Sigmoid colon (tissue), 7 donors: ENCODE measurements at regions of chr6 and their contacts with region 1.

Region 1: GRCh38 chr6:87472525-87473418 is at the start of gene SLC35A1:
- DNase-seq: peak; percentile 91
- H3K4me3 ChIP-seq: peak within 1 kb of the TSS; percentile 60 to 91 (median 74)
- H3K27ac ChIP-seq: peak within 1 kb of the TSS; percentile 86 to 95 (median 90)
- H3K4me1 ChIP-seq: peaks cover 0 to 10% (median 8%) of the 10 kb centered on the region in 4 donors
- H3K27me3 ChIP-seq: no peaks in the 10 kb centered on the region
- CTCF ChIP-seq: peak in 3 of 4 experiments; percentile 24 to 43 (median 33)
- EP300 ChIP-seq: no peak
- POLR2A ChIP-seq: peak; percentile 60 to 67
- total RNA-seq, gene SLC35A1: 17.2 to 22.5 (median 20.1) TPM

Region 2: DNA sequence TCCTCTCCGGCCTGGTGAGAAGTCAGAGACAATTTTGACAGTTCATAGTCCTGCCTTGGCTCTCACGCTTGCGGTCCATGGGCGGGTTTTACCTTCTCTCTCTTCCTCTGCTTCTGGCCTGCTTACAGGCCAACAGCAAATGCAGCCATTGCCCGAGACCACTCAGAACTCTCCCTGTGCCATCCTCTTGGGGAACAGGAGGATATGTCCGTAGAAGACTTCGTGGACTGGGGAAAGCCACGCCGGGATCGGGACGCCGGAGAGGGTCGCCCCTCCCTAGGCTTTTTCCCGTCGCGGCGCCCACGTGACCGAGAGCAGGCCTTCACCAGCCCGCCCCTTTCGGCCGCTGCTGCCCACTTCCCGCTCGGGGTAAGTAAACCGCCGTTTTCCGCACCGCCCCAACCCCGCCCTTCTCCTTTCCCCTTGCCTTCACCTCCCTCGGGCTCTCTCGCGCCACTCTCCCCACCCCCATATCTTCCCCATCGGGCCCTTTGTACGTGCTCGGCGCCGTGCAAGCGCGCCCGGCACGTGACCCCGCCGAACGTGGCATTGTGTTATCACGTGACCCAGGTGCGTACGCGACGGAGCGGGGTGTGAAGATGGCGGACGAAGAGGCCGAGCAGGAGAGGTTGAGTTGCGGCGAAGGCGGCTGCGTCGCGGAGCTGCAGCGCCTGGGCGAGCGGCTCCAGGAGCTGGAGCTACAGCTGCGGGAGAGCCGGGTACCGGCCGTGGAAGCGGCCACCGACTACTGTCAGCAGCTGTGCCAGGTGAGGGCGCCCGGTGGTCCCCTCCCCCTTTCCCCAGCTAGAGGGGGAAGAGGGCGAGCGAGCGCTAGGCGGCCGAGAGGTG is 317.6 kb before region 1 on chr6 and contains the start of gene ZNF292:
- intact Hi-C with region 1: loop called (anchors 5 kb)
- DNase-seq: peak; percentile 98
- H3K4me3 ChIP-seq: peak within 1 kb of the TSS; percentile 82 to 98 (median 94)
- H3K27ac ChIP-seq: peak within 1 kb of the TSS; percentile 92 to 98 (median 94)
- H3K4me1 ChIP-seq: peaks cover 0 to 56% (median 49%) of the 10 kb centered on the region in 4 donors
- H3K27me3 ChIP-seq: no peaks in the 10 kb centered on the region
- CTCF ChIP-seq: no peak
- EP300 ChIP-seq: peak in 2 of 4 donors; percentile 37 to 46
- POLR2A ChIP-seq: peak; percentile 28 to 49
- total RNA-seq, gene ZNF292: 50.7 to 117 (median 54.7) TPM

Region 3: GRCh38 chr6:87322304-87323212 is 150.2 kb before region 1 on chr6 and contains the start of gene SMIM8:
- intact Hi-C with region 1: loop called (anchors 2 kb)
- DNase-seq: peak; percentile 88
- H3K4me3 ChIP-seq: peak within 1 kb of the TSS; percentile 51 to 92 (median 78)
- H3K27ac ChIP-seq: peak within 1 kb of the TSS; percentile 34 to 81 (median 78)
- H3K4me1 ChIP-seq: peaks cover 0 to 12% (median 7%) of the 10 kb centered on the region in 4 donors
- H3K27me3 ChIP-seq: no peaks in the 10 kb centered on the region
- CTCF ChIP-seq: peak; percentile 74 to 100 (median 86)
- EP300 ChIP-seq: no peak
- POLR2A ChIP-seq: peak in 1 of 2 donors; percentile 19
- total RNA-seq, gene SMIM8: 6.1 to 16.8 (median 12.0) TPM

Region 4: GRCh38 chr6:87393022-87393622 is 79.7 kb before region 1 on chr6:
- intact Hi-C with region 1: loop called (anchors 5 kb)
- DNase-seq: no peak
- H3K4me3 ChIP-seq: no peak overlapping the region
- H3K27ac ChIP-seq: no peak overlapping the region
- H3K4me1 ChIP-seq: no peaks in the 10 kb centered on the region
- H3K27me3 ChIP-seq: no peaks in the 10 kb centered on the region
- CTCF ChIP-seq: peak; percentile 41 to 70 (median 62)
- EP300 ChIP-seq: no peak
- POLR2A ChIP-seq: no peak

Region 5: DNA sequence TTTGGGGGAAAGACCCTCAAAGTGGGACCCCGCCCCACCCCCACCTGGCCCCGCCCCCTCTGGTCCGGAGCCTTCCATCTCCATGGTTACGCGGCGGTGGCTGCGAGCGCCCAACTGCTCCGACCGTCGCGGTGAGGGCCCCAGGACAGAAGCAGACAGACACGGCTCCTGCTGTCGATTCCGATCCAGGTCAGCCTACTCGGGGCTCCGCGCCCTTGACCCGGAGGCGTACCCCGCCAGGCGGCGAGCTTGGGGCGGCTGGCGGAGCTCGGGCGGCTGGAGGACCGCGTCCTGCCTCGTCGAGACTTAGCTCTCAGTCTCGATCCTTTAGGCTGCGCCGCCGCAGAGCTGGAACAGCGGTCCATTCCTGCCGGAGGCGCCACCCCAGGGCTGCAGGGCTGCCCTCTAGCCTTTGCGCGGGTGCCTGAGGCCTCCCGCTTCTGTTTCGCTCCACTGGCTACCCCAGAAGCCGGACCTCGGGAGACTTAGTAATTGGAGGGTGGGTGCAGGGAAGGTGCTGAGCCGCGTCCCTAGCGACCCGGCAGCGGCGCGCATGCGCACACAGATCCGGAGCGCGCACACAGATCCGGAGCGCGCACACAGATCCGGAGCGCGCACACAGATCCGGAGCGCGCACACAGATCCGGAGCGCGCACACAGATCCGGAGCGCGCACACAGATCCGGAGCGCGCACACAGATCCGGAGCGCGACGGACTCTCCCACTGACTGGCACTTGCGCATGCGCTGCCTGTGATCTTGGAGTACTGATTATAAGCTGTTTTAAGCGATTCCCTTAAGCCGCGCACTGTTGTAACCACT is 64.7 kb before region 1 on chr6 and contains the start of gene CFAP206:
- intact Hi-C with region 1: loop called (anchors 5 kb)
- DNase-seq: peak; percentile 88
- H3K4me3 ChIP-seq: peak within 1 kb of the TSS; percentile 64 to 94 (median 84)
- H3K27ac ChIP-seq: peak within 1 kb of the TSS; percentile 82 to 90 (median 85)
- H3K4me1 ChIP-seq: peaks cover 0 to 7% (median 5%) of the 10 kb centered on the region in 4 donors
- H3K27me3 ChIP-seq: no peaks in the 10 kb centered on the region
- CTCF ChIP-seq: no peak
- EP300 ChIP-seq: no peak
- POLR2A ChIP-seq: no peak
- total RNA-seq, gene CFAP206: 0.14 to 0.36 (median 0.33) TPM in 3 of 4 donors, not detected in the other

Region 6: GRCh38 chr6:87431273-87431672 is 41.5 kb before region 1 on chr6:
- intact Hi-C with region 1: no loop called
- DNase-seq: no peak
- H3K4me3 ChIP-seq: no peak overlapping the region
- H3K27ac ChIP-seq: no peak overlapping the region
- H3K4me1 ChIP-seq: no peaks in the 10 kb centered on the region
- H3K27me3 ChIP-seq: no peaks in the 10 kb centered on the region
- CTCF ChIP-seq: no peak
- EP300 ChIP-seq: no peak
- POLR2A ChIP-seq: no peak

Region 7: GRCh38 chr6:87589693-87590549 is 117.1 kb after region 1 on chr6 and contains the starts of genes ORC3 and RARS2:
- intact Hi-C with region 1: no loop called
- DNase-seq: peak; percentile 98
- H3K4me3 ChIP-seq: peak within 1 kb of the TSS; percentile 81 to 89 (median 84)
- H3K27ac ChIP-seq: peak within 1 kb of the TSS; percentile 81 to 88 (median 87)
- H3K4me1 ChIP-seq: peaks cover 0 to 50% (median 28%) of the 10 kb centered on the region in 4 donors
- H3K27me3 ChIP-seq: no peaks in the 10 kb centered on the region
- CTCF ChIP-seq: no peak
- EP300 ChIP-seq: no peak
- POLR2A ChIP-seq: peak; percentile 90 to 92
- total RNA-seq, gene ORC3: 17.5 to 27.6 (median 23.7) TPM
- total RNA-seq, gene RARS2: 20.5 to 26.5 (median 20.6) TPM

Region 8: GRCh38 chr6:87701676-87702588 is 229.2 kb after region 1 on chr6 and contains the start of gene AKIRIN2:
- intact Hi-C with region 1: loop called (anchors 5 kb)
- DNase-seq: peak; percentile 99
- H3K4me3 ChIP-seq: peak within 1 kb of the TSS; percentile 82 to 88 (median 84)
- H3K27ac ChIP-seq: peak within 1 kb of the TSS; percentile 96 to 98 (median 96)
- H3K4me1 ChIP-seq: peaks cover 0 to 30% (median 22%) of the 10 kb centered on the region in 4 donors
- H3K27me3 ChIP-seq: no peaks in the 10 kb centered on the region
- CTCF ChIP-seq: no peak
- EP300 ChIP-seq: no peak
- POLR2A ChIP-seq: peak; percentile 94 to 95
- total RNA-seq, gene AKIRIN2: 16.6 to 20.8 (median 19.1) TPM